ENCODE measurements at regions of chr3 and their contacts with region 1.

Region 1: DNA sequence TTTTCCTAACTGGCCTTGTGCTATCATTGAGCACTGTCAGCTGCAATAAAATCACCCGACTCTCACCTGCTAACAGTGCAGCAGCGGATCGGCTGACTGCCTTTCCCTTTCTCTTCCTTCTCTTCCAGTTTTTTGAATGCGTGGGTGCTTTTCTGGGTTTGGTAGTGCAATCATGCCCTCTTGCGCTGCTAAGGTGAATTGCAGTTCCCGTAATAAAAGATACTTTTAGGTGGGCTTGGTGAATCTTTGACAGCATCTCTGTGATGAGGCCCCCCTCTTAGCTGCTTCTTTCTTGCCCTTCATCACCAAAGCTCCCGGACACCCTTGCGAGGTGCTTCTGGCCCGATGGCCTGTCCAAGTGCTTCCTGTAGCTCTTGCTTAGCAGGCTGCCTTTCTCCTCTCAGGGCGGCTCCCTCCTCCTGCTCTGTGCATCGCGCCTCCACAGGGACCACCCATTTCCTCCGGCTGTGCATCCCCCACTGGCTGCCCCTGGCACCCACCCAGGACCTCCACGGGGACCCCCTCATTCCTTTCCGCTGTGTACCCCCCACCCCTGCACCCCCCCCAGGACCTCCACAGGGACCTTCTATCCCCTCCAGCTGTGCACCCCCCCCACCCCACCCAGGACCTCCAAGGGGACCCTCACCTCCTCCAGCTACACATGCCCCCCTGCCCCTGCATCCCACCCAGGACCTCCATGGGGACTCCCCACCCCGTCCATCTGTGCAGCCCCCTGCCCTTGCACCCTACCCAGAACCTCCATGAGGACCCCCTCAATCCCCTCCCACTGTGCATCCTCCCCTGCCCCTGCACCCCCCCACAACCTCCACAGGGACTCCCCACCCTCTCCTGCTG is 50.8 kb upstream of the RPL32 start:
- DNase-seq: peak in 6 of 10 donors; percentile 45 to 68 (median 60)
- H3K4me3 ChIP-seq: peak overlapping the region in 55 of 59 donors; percentile 5 to 58 (median 37)
- H3K27ac ChIP-seq: peak overlapping the region in 53 of 59 donors; percentile 2 to 85 (median 60)
- H3K27me3 ChIP-seq: no peaks in the 10 kb centered on the region
- CTCF ChIP-seq: peak; percentile 72 to 98 (median 92)

Region 2: DNA sequence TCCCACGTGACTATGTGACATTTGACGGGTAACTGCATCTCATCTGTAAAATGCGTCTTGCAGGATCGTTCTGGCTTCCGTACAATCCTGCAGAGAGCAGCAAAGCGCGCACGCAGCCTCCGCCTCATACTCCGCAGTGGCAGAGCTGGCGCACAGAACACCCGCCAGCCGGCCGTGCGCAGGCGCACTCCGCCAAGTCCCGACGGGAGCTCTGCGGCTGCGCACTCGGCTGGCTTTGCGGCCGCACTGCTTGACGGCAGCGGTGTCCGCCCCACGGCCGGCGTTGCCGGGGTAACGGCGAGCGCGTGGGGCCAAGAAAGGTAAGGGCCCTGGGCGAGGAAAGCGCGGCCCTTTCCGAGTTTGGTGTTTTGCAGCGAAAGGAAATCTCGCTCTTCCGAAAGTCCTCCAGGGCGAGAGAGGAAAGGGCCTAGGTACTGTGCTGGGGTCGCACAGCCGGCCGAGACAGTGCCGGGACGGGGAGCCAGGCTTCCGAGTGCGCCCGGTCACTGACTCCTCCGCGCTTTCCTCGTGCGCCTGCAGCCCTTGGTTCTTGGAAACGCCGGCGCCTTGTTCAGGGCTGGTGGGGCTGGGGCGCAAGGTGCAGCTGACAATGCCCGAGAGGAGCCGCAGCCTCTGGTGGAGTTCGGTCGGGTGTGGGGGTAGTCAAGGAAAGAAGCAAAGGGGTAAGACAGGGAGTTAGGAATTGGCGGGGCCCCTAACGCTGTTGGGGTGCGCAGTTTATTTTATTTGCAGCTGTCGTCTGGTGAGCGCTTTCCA is 407.8 kb before region 1 on chr3 and contains the start of gene TSEN2:
- intact Hi-C with region 1: loop called in 1 of 2 experiments (anchors 5 kb)
- DNase-seq: peak; percentile 80 to 94 (median 88)
- H3K4me3 ChIP-seq: peak within 1 kb of the TSS; percentile 54 to 98 (median 86)
- H3K27ac ChIP-seq: peak within 1 kb of the TSS; percentile 59 to 95 (median 85)
- H3K27me3 ChIP-seq: no peaks in the 10 kb centered on the region
- CTCF ChIP-seq: peak in 50 of 56 donors; percentile 11 to 72 (median 44)
- total RNA-seq, gene TSEN2: 21.3 to 45.6 (median 32.3) TPM

Region 3: GRCh38 chr3:12663936-12664908 is 228.0 kb before region 1 on chr3 and contains the start of gene RAF1:
- intact Hi-C with region 1: no loop called
- DNase-seq: peak; percentile 97 to 99 (median 98)
- H3K4me3 ChIP-seq: peak within 1 kb of the TSS; percentile 65 to 99 (median 92)
- H3K27ac ChIP-seq: peak within 1 kb of the TSS; percentile 76 to 100 (median 100)
- H3K27me3 ChIP-seq: no peaks in the 10 kb centered on the region
- CTCF ChIP-seq: peak in 31 of 56 donors; percentile 4 to 55 (median 29)
- total RNA-seq, gene RAF1: 58.1 to 110 (median 75.9) TPM

Region 4: GRCh38 chr3:12870942-12871341 is 21.3 kb before region 1 on chr3:
- intact Hi-C with region 1: loop called in 1 of 2 experiments (anchors 1 kb)
- DNase-seq: no peak
- H3K4me3 ChIP-seq: no peak overlapping the region
- H3K27ac ChIP-seq: no peak overlapping the region
- H3K27me3 ChIP-seq: peaks cover 0 to 3% (median 0%) of the 10 kb centered on the region in 45 donors
- CTCF ChIP-seq: no peak

Region 5: DNA sequence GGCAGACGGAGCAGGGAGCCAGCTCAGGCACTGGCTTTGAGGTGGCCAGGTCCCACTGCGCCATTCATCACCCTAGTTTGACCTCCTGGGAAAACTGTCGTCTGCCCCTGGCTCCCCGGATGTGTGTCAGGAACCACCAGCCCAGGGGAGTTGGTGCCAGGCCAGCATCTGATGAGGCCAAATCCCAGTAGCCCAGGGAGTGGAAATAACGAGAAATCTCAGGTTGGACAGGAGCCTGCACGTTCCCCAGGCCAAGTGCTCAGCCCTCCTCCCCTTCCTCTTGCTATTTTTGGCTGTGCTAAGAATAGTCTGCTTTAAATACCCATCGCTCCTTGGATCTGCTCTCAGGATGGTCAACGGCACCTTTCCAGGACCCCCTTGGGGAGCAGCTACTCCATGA is 42.2 kb after region 1 on chr3:
- intact Hi-C with region 1: no loop called
- DNase-seq: peak in 1 of 10 donors; percentile 57
- H3K4me3 ChIP-seq: peak overlapping the region in 3 of 59 donors; percentile 7 to 13 (median 7)
- H3K27ac ChIP-seq: peak overlapping the region in 53 of 59 donors; percentile 0 to 89 (median 73)
- H3K27me3 ChIP-seq: no peaks in the 10 kb centered on the region
- CTCF ChIP-seq: no peak

Region 6: DNA sequence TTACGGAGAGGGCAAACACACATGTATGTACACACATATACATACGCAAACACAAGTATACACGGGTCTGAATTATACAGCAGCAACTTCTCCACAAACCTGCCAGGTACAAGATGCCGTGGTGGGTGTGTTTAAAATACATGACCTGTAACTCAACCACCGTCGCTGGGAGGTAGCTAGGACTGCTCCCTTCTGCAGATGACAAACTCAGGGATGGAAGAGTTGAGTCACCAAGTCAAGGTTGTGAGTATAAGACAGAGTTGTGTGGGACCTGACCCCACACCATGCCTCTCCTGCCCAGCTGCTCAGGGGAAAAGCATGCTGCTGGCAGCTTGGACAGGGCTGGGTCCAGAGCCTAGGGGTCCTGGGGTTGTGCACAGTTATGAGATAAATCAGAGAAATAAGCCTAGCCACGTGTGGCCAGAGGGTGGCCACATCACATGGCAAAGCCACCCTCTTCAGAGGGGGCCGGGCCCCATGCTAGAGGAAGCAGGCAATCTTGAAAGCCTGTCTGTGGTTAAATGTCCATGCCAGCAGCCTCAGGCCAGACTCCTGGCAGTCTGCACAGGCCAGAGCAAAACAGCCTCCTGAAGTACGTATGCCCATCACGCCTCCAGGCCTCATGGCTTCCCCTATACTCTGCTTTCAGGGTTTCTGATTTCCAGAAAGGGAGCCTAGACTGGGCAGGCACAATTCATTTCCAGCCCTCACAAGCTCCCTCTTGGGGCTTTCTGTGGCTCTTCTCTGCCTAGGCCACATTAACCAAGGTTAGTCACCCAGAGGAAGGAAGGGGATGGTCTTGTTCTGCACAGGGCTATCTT is 56.9 kb after region 1 on chr3:
- intact Hi-C with region 1: loop called in 1 of 2 experiments (anchors 5 kb)
- DNase-seq: no peak
- H3K4me3 ChIP-seq: no peak overlapping the region
- H3K27ac ChIP-seq: peak overlapping the region in 56 of 59 donors; percentile 19 to 100 (median 96)
- H3K27me3 ChIP-seq: no peaks in the 10 kb centered on the region
- CTCF ChIP-seq: peak in 9 of 56 donors; percentile 5 to 16 (median 9)

Region 7: GRCh38 chr3:12982619-12983101 is 90.4 kb after region 1 on chr3:
- intact Hi-C with region 1: loop called (anchors 2 to 5 kb)
- DNase-seq: no peak
- H3K4me3 ChIP-seq: no peak overlapping the region
- H3K27ac ChIP-seq: peak overlapping the region in 1 of 59 donors; percentile 69
- H3K27me3 ChIP-seq: no peaks in the 10 kb centered on the region
- CTCF ChIP-seq: no peak

Region 8: DNA sequence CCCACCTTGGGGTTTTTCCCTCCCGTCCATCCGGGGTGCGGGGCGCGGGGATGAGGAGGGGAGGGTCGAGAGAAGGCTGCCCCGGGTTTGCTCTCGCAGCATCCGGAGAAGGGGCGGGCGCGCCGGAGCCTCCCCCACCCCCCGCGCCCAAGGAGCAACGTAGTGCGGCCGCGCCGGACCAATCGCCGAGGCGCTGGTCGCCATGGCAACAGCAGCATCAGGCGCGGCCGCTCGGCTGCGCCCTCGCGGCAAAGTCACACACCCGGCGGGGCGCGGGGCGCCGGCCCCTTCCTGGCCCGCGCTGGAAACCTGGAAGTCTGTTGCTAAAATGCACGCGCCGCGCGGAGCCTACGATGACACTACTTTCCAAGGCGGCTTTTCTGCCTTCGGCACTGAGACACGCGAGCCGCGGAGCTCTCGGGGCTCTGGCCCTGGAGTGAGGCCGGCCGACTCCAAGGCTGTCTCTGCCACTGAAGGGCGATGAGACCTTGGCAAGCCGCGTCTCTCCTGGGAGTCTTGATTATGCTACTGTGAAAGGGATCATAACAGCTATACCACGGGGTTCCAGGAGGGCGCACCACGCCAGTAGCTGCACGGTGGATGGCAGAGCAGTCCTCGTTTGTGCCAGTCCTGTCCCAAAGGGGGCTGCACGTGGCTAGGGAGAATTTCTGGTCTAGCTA is 181.3 kb after region 1 on chr3 and contains the start of gene IQSEC1:
- intact Hi-C with region 1: loop called in 1 of 2 experiments (anchors 10 kb)
- DNase-seq: peak; percentile 80 to 91 (median 88)
- H3K4me3 ChIP-seq: peak within 1 kb of the TSS; percentile 49 to 83 (median 67)
- H3K27ac ChIP-seq: peak within 1 kb of the TSS; percentile 35 to 97 (median 90)
- H3K27me3 ChIP-seq: no peaks in the 10 kb centered on the region
- CTCF ChIP-seq: peak in 15 of 56 donors; percentile 4 to 35 (median 18)
- total RNA-seq, gene IQSEC1: 128 to 330 (median 245) TPM

Region 9: DNA sequence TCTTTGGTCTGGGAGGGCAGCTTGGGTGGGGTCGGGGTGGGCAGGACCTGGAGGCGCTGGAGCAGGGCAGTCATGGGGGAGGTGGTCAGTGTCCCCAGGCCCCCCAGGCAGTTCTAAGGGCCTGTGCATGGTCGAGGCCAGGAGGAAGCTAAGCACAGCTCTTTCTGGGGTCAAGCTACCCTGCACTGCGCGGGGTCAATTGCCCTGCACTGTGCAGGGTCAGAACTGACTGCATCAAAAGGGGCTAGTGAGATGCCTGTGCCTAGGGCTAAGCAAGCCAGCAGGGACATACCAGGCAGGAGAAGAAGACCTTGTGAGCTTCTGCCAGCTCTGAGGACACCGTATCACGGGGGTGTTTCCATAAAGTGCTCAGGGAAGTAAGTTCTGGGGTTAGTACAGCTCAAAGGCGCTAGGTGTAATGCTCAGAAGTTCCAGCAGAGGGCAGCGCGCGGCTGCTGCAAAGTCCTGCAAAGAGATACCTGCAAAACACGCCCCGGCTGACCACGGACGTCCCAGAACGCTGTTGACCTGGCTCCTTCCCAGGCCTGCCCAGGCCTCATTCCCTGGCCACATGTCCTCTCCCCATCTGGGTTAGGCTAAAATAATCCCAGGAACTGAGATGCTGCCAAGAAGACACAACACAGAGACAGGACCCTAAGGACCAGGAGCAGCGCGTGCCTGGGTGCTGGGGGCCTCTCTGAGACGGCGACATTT is 199.8 kb after region 1 on chr3:
- intact Hi-C with region 1: no loop called
- DNase-seq: peak; percentile 80 to 92 (median 88)
- H3K4me3 ChIP-seq: peak overlapping the region in 15 of 59 donors; percentile 6 to 31 (median 22)
- H3K27ac ChIP-seq: peak overlapping the region in 14 of 59 donors; percentile 12 to 62 (median 32)
- H3K27me3 ChIP-seq: no peaks in the 10 kb centered on the region
- CTCF ChIP-seq: peak; percentile 81 to 99 (median 98)

Region 10: GRCh38 chr3:13346481-13347389 is 454.5 kb after region 1 on chr3:
- intact Hi-C with region 1: no loop called
- DNase-seq: peak in 9 of 10 donors; percentile 35 to 86 (median 68)
- H3K4me3 ChIP-seq: no peak overlapping the region
- H3K27ac ChIP-seq: peak overlapping the region in 57 of 59 donors; percentile 15 to 95 (median 77)
- H3K27me3 ChIP-seq: no peaks in the 10 kb centered on the region
- CTCF ChIP-seq: peak in 16 of 56 donors; percentile 8 to 38 (median 18)

Measured in dorsolateral prefrontal cortex (tissue), 120 donors.